Transverse colon (tissue), 4 donors: ENCODE measurements at regions of chr17 and their contacts with region 1.

Region 1: GRCh38 chr17:3474212-3474611 is 1.6 kb upstream of the ASPA start:
- DNase-seq: no peak
- H3K4me3 ChIP-seq: no peak overlapping the region
- H3K27ac ChIP-seq: peak overlapping the region; percentile 69 to 84 (median 74)
- H3K4me1 ChIP-seq: peaks cover 11 to 38% (median 18%) of the 10 kb centered on the region in 4 donors
- H3K27me3 ChIP-seq: no peaks in the 10 kb centered on the region
- CTCF ChIP-seq: no peak
- EP300 ChIP-seq: no peak
- POLR2A ChIP-seq: no peak

Region 2: DNA sequence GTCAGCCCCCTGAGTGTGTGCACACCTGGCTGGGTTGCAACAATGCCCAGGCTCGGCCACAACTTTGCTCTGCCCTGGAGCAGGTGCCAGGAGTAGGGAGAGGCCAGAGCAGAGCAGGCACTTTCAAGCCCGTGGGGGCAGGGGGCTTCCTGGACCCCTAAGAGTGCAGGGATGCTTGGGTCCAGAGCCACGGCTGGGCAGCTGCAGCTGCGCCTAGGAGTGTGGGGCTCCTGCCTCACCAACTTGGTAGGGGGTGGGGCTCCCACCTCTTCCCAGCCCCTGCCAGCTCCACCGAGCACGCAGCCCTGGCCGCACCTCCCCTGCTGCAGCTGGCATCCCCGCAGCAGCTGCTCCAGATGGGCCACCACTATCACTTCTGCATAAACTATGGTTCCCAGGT is 95.9 kb before region 1 on chr17:
- in situ Hi-C with region 1: loop called in 2 of 4 experiments (anchors 25 kb)
- intact Hi-C with region 1: no loop called
- DNase-seq: no peak
- H3K4me3 ChIP-seq: no peak overlapping the region
- H3K27ac ChIP-seq: no peak overlapping the region
- H3K4me1 ChIP-seq: no peaks in the 10 kb centered on the region
- H3K27me3 ChIP-seq: no peaks in the 10 kb centered on the region
- CTCF ChIP-seq: no peak
- EP300 ChIP-seq: no peak
- POLR2A ChIP-seq: no peak

Region 3: GRCh38 chr17:3385869-3386816 is 88.1 kb before region 1 on chr17 and contains the start of gene OR3A2:
- in situ Hi-C with region 1: loop called in 1 of 4 experiments (anchors 25 kb)
- intact Hi-C with region 1: no loop called
- DNase-seq: no peak
- H3K4me3 ChIP-seq: no peak within 1 kb of the TSS
- H3K27ac ChIP-seq: no peak within 1 kb of the TSS
- H3K4me1 ChIP-seq: no peaks in the 10 kb centered on the region
- H3K27me3 ChIP-seq: peaks cover 38% of the 10 kb centered on the region
- CTCF ChIP-seq: no peak
- EP300 ChIP-seq: no peak
- POLR2A ChIP-seq: no peak
- total RNA-seq, gene OR3A2: not detected